ENCODE measurements at regions of chr13 and their contacts with region 1.

Region 1: GRCh38 chr13:78978381-78978998 is 319.5 kb upstream of the OBI1 start:
- DNase-seq: peak; percentile 55
- ATAC-seq: peak; percentile 71
- H3K4me3 Mint-ChIP-seq: no peak overlapping the region
- H3K27ac Mint-ChIP-seq: no peak overlapping the region
- H3K4me1 Mint-ChIP-seq: no peaks in the 10 kb centered on the region
- H3K27me3 Mint-ChIP-seq: peaks cover 8% of the 10 kb centered on the region

Region 2: DNA sequence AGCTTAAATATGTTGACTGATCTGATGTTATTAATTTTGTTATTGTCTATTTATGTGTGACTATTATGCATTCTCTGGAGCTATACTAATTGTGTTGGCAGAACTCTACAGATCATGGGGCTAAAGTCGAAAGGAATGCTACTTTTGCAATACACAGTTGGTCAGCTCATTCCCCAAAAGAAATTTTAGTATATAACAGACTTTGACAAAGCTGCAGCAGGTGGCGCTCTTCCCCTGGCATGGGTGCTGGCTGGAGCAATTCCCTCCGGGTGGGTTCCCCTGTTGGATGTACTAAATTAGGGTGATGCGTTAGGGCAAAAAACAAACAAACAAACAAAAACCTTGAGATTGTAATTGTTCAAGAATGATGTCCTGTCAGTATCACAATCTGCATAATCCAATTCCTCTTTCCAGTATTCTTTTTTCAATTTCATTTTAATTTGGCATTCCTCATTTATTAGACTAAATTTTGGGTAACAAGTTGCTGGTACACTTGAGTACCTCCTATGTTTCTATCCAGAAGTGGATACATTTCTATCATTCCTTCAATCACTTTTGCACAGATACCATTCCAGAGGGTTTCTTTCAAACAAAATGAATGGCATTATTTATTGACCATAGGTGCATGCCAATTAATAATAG is 737.1 kb before region 1 on chr13:
- CTCF ChIA-PET with region 1: interaction called, 17 read pairs
- POLR2A ChIA-PET with region 1: no interaction called
- intact Hi-C with region 1: loop called (anchors 1 to 5 kb)
- DNase-seq: peak; percentile 62
- ATAC-seq: no peak
- H3K4me3 Mint-ChIP-seq: no peak overlapping the region
- H3K27ac Mint-ChIP-seq: no peak overlapping the region
- H3K4me1 Mint-ChIP-seq: no peaks in the 10 kb centered on the region
- H3K27me3 Mint-ChIP-seq: peaks cover 5% of the 10 kb centered on the region

Region 3: GRCh38 chr13:78317030-78317429 is 661.5 kb before region 1 on chr13:
- CTCF ChIA-PET with region 1: no interaction called
- POLR2A ChIA-PET with region 1: no interaction called
- intact Hi-C with region 1: loop called in 1 of 2 experiments (anchors 5 kb)
- DNase-seq: no peak
- ATAC-seq: no peak
- H3K4me3 Mint-ChIP-seq: no peak overlapping the region
- H3K27ac Mint-ChIP-seq: no peak overlapping the region
- H3K4me1 Mint-ChIP-seq: no peaks in the 10 kb centered on the region
- H3K27me3 Mint-ChIP-seq: peaks cover 3% of the 10 kb centered on the region

Region 4: GRCh38 chr13:79043208-79043607 is 64.7 kb after region 1 on chr13:
- CTCF ChIA-PET with region 1: no interaction called
- POLR2A ChIA-PET with region 1: no interaction called
- intact Hi-C with region 1: no loop called
- DNase-seq: no peak
- ATAC-seq: no peak
- H3K4me3 Mint-ChIP-seq: no peak overlapping the region
- H3K27ac Mint-ChIP-seq: no peak overlapping the region
- H3K4me1 Mint-ChIP-seq: no peaks in the 10 kb centered on the region
- H3K27me3 Mint-ChIP-seq: peaks cover 10% of the 10 kb centered on the region